ENCODE measurements at regions of chr7 and their contacts with region 1.

Region 1: GRCh38 chr7:32490127-32490822 is at the start of gene LSM5:
- DNase-seq: peak; percentile 84 to 96
- ATAC-seq: peak; percentile 72 to 85 (median 79)
- H3K4me3 ChIP-seq: peak within 1 kb of the TSS; percentile 94
- H3K4me3 Mint-ChIP-seq: peak within 1 kb of the TSS; percentile 98
- H3K27ac ChIP-seq: peak within 1 kb of the TSS; percentile 89
- H3K27ac Mint-ChIP-seq: peak within 1 kb of the TSS; percentile 90 to 98
- H3K4me1 ChIP-seq: peaks cover 16% of the 10 kb centered on the region
- H3K4me1 Mint-ChIP-seq: peaks cover 18 to 37% of the 10 kb centered on the region in 2 donors
- H3K27me3 ChIP-seq: no peaks in the 10 kb centered on the region
- H3K27me3 Mint-ChIP-seq: no peaks in the 10 kb centered on the region
- CTCF ChIP-seq: no peak
- total RNA-seq, gene LSM5: 16.0 to 21.2 (median 21.1) TPM

Region 2: DNA sequence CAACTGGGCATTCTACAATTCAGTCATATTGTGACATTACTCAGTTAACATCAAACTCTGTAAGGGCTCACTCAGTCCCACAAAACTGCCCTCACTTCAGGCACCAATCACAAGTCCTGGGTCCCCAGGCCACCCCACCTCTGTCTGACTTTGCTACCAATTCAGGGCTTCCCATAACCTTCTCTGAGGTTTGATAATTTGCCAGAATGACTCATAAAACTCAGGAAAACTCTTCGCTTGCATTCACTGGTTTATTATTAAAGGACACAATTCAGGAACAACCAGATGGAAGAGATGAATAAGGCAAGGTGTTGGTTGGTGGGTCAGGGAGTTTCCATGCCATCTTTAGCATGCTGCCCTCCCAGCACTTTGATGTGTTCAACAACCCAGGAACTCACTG is 46.3 kb after region 1 on chr7:
- intact Hi-C with region 1: loop called (anchors 5 kb)
- DNase-seq: no peak
- ATAC-seq: no peak
- H3K4me3 ChIP-seq: no peak overlapping the region
- H3K4me3 Mint-ChIP-seq: no peak overlapping the region
- H3K27ac ChIP-seq: no peak overlapping the region
- H3K27ac Mint-ChIP-seq: no peak overlapping the region
- H3K4me1 ChIP-seq: peaks cover 5% of the 10 kb centered on the region
- H3K4me1 Mint-ChIP-seq: peaks cover 44 to 49% of the 10 kb centered on the region in 2 donors
- H3K27me3 ChIP-seq: no peaks in the 10 kb centered on the region
- H3K27me3 Mint-ChIP-seq: no peaks in the 10 kb centered on the region
- CTCF ChIP-seq: no peak

Measured in natural killer cell (primary cell).